Sigmoid colon (tissue), 7 donors: ENCODE measurements at regions of chr17 and their contacts with region 1.

Region 1: DNA sequence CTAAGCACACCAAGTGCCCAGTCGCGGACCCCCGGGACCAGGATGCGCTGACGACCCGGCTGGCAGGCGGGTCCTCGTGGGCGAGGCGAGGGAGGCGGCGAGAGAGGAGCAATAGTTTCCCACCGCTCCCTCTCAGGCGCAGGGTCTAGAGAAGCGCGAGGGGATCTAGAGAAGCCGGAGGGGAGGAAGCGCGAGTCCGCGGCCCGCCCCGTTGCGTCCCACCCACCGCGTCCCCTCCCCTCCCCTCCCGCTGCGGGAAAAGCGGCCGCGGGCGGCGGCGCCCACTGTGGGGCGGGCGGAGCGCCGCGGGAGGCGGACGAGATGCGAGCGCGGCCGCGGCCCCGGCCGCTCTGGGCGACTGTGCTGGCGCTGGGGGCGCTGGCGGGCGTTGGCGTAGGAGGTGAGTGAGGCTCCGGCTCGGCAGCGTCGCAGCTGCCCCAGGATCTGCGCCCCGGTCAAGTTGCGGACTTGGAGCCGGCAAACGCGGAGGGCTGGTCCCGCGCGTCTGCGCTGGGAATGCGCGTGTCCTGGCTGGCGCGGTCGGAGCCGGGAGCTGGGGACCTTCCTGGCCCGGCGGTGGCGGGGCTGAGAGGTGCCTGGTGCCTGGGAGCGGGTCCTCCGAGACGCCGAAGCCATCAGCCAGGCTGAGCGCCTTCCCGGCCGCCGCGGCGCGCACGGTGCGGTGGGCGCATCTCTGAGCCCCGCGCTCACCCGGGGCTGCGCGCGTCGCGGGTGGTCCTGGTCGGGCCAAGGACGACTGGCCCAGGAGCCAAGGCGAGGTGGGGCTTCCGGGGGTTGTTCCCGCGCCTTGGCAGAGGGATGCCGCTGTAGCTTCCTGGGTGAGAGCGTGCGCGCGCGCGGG is at the start of gene ITGB3:
- DNase-seq: peak; percentile 90
- H3K4me3 ChIP-seq: peak within 1 kb of the TSS; percentile 78 to 92 (median 84)
- H3K27ac ChIP-seq: peak within 1 kb of the TSS; percentile 90 to 94 (median 93)
- H3K4me1 ChIP-seq: peaks cover 0 to 38% (median 34%) of the 10 kb centered on the region in 4 donors
- H3K27me3 ChIP-seq: no peaks in the 10 kb centered on the region
- CTCF ChIP-seq: peak in 2 of 4 experiments; percentile 10 to 43
- EP300 ChIP-seq: no peak
- POLR2A ChIP-seq: peak in 1 of 2 donors; percentile 49
- total RNA-seq, gene ITGB3: 28.5 to 62.7 (median 40.1) TPM

Region 2: DNA sequence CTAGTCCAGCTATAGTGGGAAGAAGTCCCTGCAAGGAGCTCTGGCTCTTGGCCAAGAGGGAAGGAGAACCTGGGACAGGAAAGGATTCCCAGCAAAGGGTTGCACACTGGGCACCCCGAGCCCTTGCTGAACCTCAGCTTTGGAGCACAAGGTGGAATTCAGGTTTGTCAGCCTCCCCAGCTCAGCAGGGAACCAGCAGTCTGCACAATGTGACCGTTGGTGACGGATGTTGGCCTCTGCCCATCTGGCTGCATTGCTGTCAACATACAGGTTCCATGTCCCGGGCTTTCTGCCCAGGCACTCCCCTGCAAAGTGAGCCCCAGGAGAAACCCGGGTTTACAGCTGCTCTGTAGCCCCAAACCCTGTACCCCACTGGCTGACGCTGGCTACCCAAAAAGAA is 281.4 kb before region 1 on chr17:
- intact Hi-C with region 1: no loop called
- DNase-seq: no peak
- H3K4me3 ChIP-seq: no peak overlapping the region
- H3K27ac ChIP-seq: no peak overlapping the region
- H3K4me1 ChIP-seq: no peaks in the 10 kb centered on the region
- H3K27me3 ChIP-seq: peaks cover 5 to 14% (median 13%) of the 10 kb centered on the region in 3 donors
- CTCF ChIP-seq: no peak
- EP300 ChIP-seq: no peak
- POLR2A ChIP-seq: no peak

Region 3: DNA sequence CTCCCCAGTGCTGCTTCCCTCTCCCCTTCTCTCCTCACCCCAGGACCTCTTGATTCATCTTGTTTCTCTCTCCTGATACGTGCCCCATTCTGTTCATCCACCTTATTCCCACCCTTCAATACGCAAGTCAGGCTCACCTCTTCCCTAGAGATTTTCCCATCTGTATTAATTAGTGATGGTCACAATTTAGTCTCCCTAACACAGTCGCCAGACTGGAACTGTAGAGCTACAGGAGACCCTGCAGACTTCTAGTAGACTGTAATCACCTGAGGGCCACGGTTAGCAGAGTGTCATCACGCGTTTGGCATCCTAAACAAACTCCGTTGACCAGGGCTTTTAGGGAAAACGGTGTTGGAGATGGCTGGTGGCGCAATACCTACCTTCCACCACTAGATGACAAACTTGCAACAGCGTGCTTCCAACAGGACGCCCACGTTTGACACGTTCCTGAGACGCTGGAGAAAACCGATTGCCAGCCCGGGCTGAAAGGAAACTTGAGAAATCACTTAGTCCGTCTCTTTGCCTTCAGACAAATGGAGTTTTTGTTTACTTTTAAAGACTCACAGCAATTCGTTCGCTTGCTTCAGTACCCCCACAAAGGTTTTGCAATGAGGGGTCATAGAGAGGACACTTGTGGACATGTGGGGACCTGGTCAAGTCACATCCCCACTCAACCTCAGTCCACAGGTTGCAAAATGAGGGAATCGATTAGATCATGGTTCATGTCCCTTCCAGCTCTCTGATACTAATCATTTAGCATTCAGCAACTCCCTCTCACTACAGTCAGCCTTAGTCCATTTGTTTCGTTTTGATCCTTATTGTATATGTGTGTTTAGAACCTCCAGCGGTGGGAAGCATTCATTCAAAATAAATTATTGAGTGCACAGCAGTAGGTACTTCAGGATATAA is 24.0 kb before region 1 on chr17:
- intact Hi-C with region 1: loop called (anchors 2 kb)
- DNase-seq: peak; percentile 96
- H3K4me3 ChIP-seq: peak overlapping the region in 3 of 4 donors; percentile 13 to 29 (median 27)
- H3K27ac ChIP-seq: peak overlapping the region; percentile 39 to 69 (median 59)
- H3K4me1 ChIP-seq: peaks cover 0 to 27% (median 23%) of the 10 kb centered on the region in 4 donors
- H3K27me3 ChIP-seq: no peaks in the 10 kb centered on the region
- CTCF ChIP-seq: peak; percentile 99 to 100 (median 99)
- EP300 ChIP-seq: peak in 1 of 4 donors; percentile 18
- POLR2A ChIP-seq: no peak

Region 4: GRCh38 chr17:47275245-47275984 is 21.6 kb after region 1 on chr17:
- intact Hi-C with region 1: loop called (anchors 1 kb)
- DNase-seq: peak; percentile 98
- H3K4me3 ChIP-seq: no peak overlapping the region
- H3K27ac ChIP-seq: peak overlapping the region; percentile 86 to 92 (median 88)
- H3K4me1 ChIP-seq: peaks cover 0 to 69% (median 64%) of the 10 kb centered on the region in 4 donors
- H3K27me3 ChIP-seq: no peaks in the 10 kb centered on the region
- CTCF ChIP-seq: no peak
- EP300 ChIP-seq: peak; percentile 39 to 93 (median 55)
- POLR2A ChIP-seq: no peak

Region 5: DNA sequence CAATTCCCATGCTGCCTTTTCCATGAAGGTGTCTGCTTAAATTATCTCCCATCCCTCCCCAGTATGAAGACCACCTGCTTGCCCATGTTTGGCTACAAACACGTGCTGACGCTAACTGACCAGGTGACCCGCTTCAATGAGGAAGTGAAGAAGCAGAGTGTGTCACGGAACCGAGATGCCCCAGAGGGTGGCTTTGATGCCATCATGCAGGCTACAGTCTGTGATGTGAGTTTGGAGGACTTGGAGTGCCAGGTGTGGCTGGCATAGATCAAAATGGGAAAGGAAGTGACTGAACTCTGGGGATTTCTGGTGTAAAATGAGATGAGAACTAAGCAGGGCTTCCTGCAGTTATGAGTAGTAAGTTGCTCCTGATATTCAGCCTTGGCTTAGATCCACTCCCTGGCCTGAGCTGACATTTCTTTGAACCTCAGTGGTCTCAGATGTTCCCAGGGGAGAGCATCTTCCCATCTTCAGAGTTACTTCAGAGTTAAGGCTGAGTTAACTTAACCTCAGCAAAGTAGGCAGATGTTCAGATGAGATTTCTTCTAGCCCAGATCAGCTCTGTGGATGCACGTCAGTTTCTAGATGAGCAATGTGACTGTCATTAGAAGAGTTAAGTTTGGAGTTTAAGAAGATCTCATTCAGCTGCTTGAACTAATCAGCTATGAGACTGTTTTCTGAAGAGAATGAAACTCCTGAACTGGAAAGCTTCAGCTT is 32.6 kb after region 1 on chr17:
- intact Hi-C with region 1: no loop called
- DNase-seq: no peak
- H3K4me3 ChIP-seq: no peak overlapping the region
- H3K27ac ChIP-seq: no peak overlapping the region
- H3K4me1 ChIP-seq: peaks cover 0 to 4% (median 0%) of the 10 kb centered on the region in 4 donors
- H3K27me3 ChIP-seq: no peaks in the 10 kb centered on the region
- CTCF ChIP-seq: no peak
- EP300 ChIP-seq: no peak
- POLR2A ChIP-seq: no peak

Region 6: GRCh38 chr17:47315451-47316266 is 61.9 kb after region 1 on chr17:
- intact Hi-C with region 1: loop called (anchors 2 kb)
- DNase-seq: no peak
- H3K4me3 ChIP-seq: no peak overlapping the region
- H3K27ac ChIP-seq: peak overlapping the region; percentile 72 to 82 (median 80)
- H3K4me1 ChIP-seq: peaks cover 0 to 24% (median 18%) of the 10 kb centered on the region in 4 donors
- H3K27me3 ChIP-seq: no peaks in the 10 kb centered on the region
- CTCF ChIP-seq: peak; percentile 73 to 95 (median 82)
- EP300 ChIP-seq: peak in 1 of 4 donors; percentile 20
- POLR2A ChIP-seq: no peak